ENCODE measurements at regions of chr3 and their contacts with region 1.

Region 1: GRCh38 chr3:177359593-177360357 is 162.5 kb upstream of the TBL1XR1 start:
- DNase-seq: peak; percentile 98
- H3K4me3 ChIP-seq: peak overlapping the region in 2 of 3 experiments; percentile 16 to 43
- H3K27ac ChIP-seq: peak overlapping the region; percentile 98
- H3K4me1 ChIP-seq: peaks cover 50% of the 10 kb centered on the region
- H3K27me3 ChIP-seq: no peaks in the 10 kb centered on the region
- CTCF ChIP-seq: no peak
- POLR2A ChIP-seq: no peak

Region 2: DNA sequence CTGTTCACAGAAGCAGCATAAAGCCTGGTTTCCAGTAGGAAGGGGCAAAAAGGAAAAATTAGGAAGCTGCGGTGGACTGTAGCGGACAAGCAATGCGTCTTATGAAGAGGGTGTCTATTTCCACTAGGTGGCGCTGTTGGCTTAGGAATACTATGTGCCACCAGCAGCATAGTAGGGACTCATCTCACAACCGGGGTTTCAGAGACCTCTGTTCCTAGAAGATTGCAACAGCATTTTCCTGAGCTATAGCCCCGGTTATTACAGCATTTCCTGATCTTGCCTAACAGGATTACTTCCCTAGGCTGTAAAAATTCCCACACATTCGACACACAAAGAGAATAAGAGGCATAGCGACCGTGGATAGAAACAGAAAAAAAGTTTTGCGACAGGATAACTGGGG is 845.5 kb before region 1 on chr3:
- CTCF ChIA-PET with region 1: no interaction called
- POLR2A ChIA-PET with region 1: no interaction called
- dilution Hi-C with region 1: no loop called
- intact Hi-C with region 1: loop called (anchors 10 kb)
- DNase-seq: peak; percentile 73
- H3K4me3 ChIP-seq: no peak overlapping the region
- H3K27ac ChIP-seq: no peak overlapping the region
- H3K4me1 ChIP-seq: no peaks in the 10 kb centered on the region
- H3K27me3 ChIP-seq: no peaks in the 10 kb centered on the region
- CTCF ChIP-seq: peak; percentile 34 to 41
- POLR2A ChIP-seq: no peak

Region 3: GRCh38 chr3:177150970-177151627 is 208.7 kb before region 1 on chr3:
- CTCF ChIA-PET with region 1: no interaction called
- POLR2A ChIA-PET with region 1: no interaction called
- dilution Hi-C with region 1: no loop called
- intact Hi-C with region 1: no loop called
- DNase-seq: peak; percentile 76
- H3K4me3 ChIP-seq: no peak overlapping the region
- H3K27ac ChIP-seq: no peak overlapping the region
- H3K4me1 ChIP-seq: peaks cover 11% of the 10 kb centered on the region
- H3K27me3 ChIP-seq: no peaks in the 10 kb centered on the region
- CTCF ChIP-seq: no peak
- POLR2A ChIP-seq: no peak

Region 4: DNA sequence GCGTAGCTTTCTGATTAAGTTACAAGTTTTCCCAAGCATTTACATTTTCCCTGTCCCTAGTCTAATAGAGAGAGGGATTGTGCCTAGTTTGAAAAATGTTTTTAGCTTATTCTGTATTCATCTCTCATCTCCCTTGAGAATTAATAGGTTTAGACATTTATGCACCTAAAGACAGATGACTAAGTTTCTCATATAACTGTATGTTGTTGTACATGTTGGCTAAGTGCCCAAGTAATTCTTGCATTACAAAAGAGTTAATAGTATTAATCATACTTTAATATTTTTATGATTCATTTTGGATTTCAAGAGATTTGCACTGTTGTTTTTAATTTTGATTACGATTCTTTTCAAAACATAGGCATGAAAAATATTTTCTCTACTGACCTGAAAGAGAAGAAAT is 53.5 kb before region 1 on chr3:
- CTCF ChIA-PET with region 1: interaction called, 3 read pairs
- POLR2A ChIA-PET with region 1: no interaction called
- dilution Hi-C with region 1: no loop called
- intact Hi-C with region 1: loop called (anchors 1 kb)
- DNase-seq: peak; percentile 72
- H3K4me3 ChIP-seq: no peak overlapping the region
- H3K27ac ChIP-seq: no peak overlapping the region
- H3K4me1 ChIP-seq: peaks cover 6% of the 10 kb centered on the region
- H3K27me3 ChIP-seq: no peaks in the 10 kb centered on the region
- CTCF ChIP-seq: no peak
- POLR2A ChIP-seq: no peak

Region 5: GRCh38 chr3:177478170-177478860 is 118.5 kb after region 1 on chr3:
- CTCF ChIA-PET with region 1: no interaction called
- POLR2A ChIA-PET with region 1: no interaction called
- dilution Hi-C with region 1: no loop called
- intact Hi-C with region 1: loop called (anchors 1 kb)
- DNase-seq: peak; percentile 72
- H3K4me3 ChIP-seq: no peak overlapping the region
- H3K27ac ChIP-seq: no peak overlapping the region
- H3K4me1 ChIP-seq: peaks cover 3% of the 10 kb centered on the region
- H3K27me3 ChIP-seq: no peaks in the 10 kb centered on the region
- CTCF ChIP-seq: no peak
- POLR2A ChIP-seq: no peak

Region 6: DNA sequence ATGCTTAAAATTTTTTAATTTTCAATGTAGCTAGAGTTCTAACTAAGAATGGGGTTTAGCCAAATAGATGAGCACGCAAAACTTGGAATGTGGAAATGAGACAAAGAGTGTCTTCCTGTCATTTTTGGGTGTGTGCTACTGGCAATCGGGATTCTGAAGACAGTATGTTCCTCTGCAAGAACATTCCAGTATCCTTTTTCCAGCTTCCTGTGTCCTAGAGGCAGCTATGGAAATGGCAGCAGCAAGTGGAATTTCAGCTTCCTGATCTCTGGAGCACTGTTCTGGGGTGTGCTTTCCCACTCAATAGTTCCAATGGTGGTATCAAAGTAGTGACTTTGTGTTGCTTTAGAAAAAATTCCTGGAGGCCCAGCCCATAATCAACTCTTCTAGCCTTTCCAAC is 533.5 kb after region 1 on chr3:
- CTCF ChIA-PET with region 1: no interaction called
- POLR2A ChIA-PET with region 1: no interaction called
- dilution Hi-C with region 1: no loop called
- intact Hi-C with region 1: loop called (anchors 1 kb)
- DNase-seq: peak; percentile 35
- H3K4me3 ChIP-seq: no peak overlapping the region
- H3K27ac ChIP-seq: peak overlapping the region; percentile 66
- H3K4me1 ChIP-seq: peaks cover 21% of the 10 kb centered on the region
- H3K27me3 ChIP-seq: no peaks in the 10 kb centered on the region
- CTCF ChIP-seq: peak; percentile 16 to 28
- POLR2A ChIP-seq: no peak

Region 7: GRCh38 chr3:178255315-178255714 is 895.5 kb after region 1 on chr3:
- CTCF ChIA-PET with region 1: no interaction called
- POLR2A ChIA-PET with region 1: no interaction called
- dilution Hi-C with region 1: no loop called
- intact Hi-C with region 1: loop called (anchors 1 kb)
- DNase-seq: peak; percentile 98
- H3K4me3 ChIP-seq: no peak overlapping the region
- H3K27ac ChIP-seq: peak overlapping the region; percentile 62
- H3K4me1 ChIP-seq: peaks cover 15% of the 10 kb centered on the region
- H3K27me3 ChIP-seq: no peaks in the 10 kb centered on the region
- CTCF ChIP-seq: no peak
- POLR2A ChIP-seq: peak; percentile 49